Activated naive CD4-positive, alpha-beta T cell treated with anti-CD3 and anti-CD28 coated beads for 36 hours (primary cell): ENCODE measurements at regions of chr19 and their contacts with region 1.

Region 1: GRCh38 chr19:46661020-46661731 is at the start of gene DACT3:
- DNase-seq: peak; percentile 100
- H3K4me3 Mint-ChIP-seq: peak within 1 kb of the TSS; percentile 75
- H3K27ac Mint-ChIP-seq: no peak within 1 kb of the TSS
- H3K4me1 Mint-ChIP-seq: peaks cover 29% of the 10 kb centered on the region
- H3K27me3 Mint-ChIP-seq: peaks cover 16% of the 10 kb centered on the region
- total RNA-seq, gene DACT3: 2.4 to 3.0 TPM

Region 2: DNA sequence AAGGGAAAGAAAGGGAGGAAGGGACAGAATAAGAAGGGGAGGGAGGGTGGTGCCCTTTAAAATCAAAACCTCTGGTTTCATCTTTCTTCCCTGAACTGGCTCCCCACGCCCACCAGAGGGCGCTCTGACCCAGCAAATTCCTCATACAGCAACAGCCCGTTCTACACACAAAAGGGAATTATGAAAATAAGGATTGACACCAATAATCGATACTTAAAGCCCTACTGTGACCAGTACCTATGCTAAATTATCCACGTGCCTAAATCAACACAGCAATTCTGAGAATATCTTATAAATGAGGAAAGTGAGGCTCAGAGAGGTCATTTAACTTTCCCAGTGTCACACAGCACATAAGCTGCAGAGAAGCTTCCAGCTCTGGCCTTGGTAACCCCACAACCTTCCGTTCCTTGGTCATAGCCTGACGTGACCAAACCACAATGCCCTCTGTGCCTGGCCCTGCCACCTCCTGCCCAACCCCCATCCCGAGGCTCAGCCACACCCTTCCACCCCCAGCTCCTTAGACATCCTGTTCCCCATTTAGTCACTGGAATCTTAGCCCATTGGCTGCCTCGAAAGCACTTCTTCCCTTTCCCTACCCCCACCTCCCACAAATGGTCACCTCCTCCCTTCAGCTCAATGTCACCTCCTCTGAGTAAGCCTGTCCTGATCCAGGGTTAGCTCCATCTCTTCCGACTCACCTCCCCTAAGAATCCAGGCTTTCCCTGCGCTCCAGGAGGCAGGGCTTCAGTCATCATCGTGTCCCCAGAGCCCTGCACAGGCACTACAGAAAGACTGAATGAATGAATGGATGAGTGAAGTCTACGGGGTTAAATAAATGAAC is 131.3 kb before region 1 on chr19:
- CTCF ChIA-PET with region 1: interaction called, 25 read pairs
- intact Hi-C with region 1: loop called (anchors 1 kb)
- DNase-seq: peak; percentile 84
- H3K4me3 Mint-ChIP-seq: no peak overlapping the region
- H3K27ac Mint-ChIP-seq: peak overlapping the region; percentile 30
- H3K4me1 Mint-ChIP-seq: peaks cover 27% of the 10 kb centered on the region
- H3K27me3 Mint-ChIP-seq: no peaks in the 10 kb centered on the region

Region 3: DNA sequence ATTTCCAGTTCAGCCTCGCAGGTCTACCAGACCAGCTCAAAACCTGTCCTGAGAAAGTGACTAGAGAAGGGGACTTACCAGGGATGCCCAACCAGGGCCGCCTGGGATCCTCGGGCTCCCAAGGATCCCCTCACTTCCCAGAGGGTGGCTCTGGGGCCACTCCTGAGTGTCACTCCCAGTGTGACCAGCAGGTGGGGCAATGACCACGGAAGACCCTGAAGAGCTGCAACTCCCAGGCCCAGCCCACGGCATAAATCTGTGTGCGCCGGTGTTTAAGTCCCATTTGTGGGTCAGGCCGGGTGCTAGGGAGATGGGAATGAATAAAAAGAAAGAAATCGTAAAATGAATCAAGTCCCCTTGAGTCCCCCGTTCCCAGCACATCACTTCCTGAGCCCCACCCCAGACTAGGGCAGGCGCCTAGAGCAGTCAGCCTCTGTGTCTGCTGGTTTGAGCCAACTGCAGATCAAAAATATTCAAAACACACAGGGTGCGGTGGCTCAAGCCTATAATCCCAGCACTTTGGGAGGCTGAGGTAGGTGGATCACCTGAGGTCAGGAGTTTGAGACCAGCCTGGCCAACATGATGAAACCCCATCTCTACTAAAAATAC is 47.0 kb before region 1 on chr19:
- CTCF ChIA-PET with region 1: interaction called, 178 read pairs
- intact Hi-C with region 1: loop called (anchors 1 kb)
- DNase-seq: peak; percentile 93
- H3K4me3 Mint-ChIP-seq: no peak overlapping the region
- H3K27ac Mint-ChIP-seq: peak overlapping the region; percentile 67
- H3K4me1 Mint-ChIP-seq: peaks cover 75% of the 10 kb centered on the region
- H3K27me3 Mint-ChIP-seq: no peaks in the 10 kb centered on the region

Region 4: DNA sequence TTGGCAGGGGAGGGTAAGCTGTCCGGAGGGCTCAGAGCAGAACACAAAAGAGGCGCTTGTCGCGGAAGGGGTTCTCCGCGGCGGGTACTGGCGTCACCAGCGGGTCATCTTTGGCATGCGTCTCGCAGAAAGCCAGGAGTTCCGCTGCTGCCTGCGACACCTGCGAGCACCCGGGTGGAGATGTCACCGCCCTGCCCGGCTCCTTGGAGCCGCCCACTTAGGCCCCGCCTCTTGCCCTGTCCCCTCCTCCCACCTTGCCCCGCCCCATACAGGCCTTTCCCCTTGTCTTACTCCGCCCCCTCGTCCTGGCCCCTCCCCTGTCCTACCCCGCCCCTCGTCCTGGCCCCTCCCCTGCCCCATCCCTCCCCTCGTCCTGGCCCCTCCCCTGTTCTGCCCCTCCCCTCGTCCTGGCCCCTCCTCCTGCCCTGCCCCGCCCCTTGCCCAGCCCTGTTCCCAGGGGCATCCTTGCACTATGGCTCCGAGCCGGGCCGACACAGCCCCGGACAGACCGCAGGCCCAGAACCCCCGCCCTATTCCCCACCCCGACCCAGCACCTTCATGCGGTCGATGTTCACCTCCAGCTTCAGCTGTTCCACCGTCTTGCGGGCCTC is 27.0 kb before region 1 on chr19:
- CTCF ChIA-PET with region 1: interaction called, 15 read pairs
- intact Hi-C with region 1: loop called (anchors 1 kb)
- DNase-seq: peak; percentile 99
- H3K4me3 Mint-ChIP-seq: peak overlapping the region; percentile 74
- H3K27ac Mint-ChIP-seq: peak overlapping the region; percentile 54
- H3K4me1 Mint-ChIP-seq: peaks cover 21% of the 10 kb centered on the region
- H3K27me3 Mint-ChIP-seq: no peaks in the 10 kb centered on the region

Region 5: GRCh38 chr19:46717034-46717723 is 56.0 kb after region 1 on chr19 and contains the start of gene PRKD2:
- CTCF ChIA-PET with region 1: interaction called, 4 read pairs
- intact Hi-C with region 1: loop called (anchors 1 kb)
- DNase-seq: peak; percentile 93
- H3K4me3 Mint-ChIP-seq: peak within 1 kb of the TSS; percentile 96
- H3K27ac Mint-ChIP-seq: peak within 1 kb of the TSS; percentile 94
- H3K4me1 Mint-ChIP-seq: peaks cover 46% of the 10 kb centered on the region
- H3K27me3 Mint-ChIP-seq: no peaks in the 10 kb centered on the region
- total RNA-seq, gene PRKD2: 62.2 to 62.3 TPM

Region 6: GRCh38 chr19:46860125-46860845 is 199.1 kb after region 1 on chr19:
- CTCF ChIA-PET with region 1: no interaction called
- intact Hi-C with region 1: loop called (anchors 1 kb)
- DNase-seq: peak; percentile 97
- H3K4me3 Mint-ChIP-seq: peak overlapping the region; percentile 84
- H3K27ac Mint-ChIP-seq: peak overlapping the region; percentile 87
- H3K4me1 Mint-ChIP-seq: peaks cover 21% of the 10 kb centered on the region
- H3K27me3 Mint-ChIP-seq: no peaks in the 10 kb centered on the region